PC-9 (cell line): ENCODE measurements at regions of chr2 and their contacts with region 1.

Region 1: DNA sequence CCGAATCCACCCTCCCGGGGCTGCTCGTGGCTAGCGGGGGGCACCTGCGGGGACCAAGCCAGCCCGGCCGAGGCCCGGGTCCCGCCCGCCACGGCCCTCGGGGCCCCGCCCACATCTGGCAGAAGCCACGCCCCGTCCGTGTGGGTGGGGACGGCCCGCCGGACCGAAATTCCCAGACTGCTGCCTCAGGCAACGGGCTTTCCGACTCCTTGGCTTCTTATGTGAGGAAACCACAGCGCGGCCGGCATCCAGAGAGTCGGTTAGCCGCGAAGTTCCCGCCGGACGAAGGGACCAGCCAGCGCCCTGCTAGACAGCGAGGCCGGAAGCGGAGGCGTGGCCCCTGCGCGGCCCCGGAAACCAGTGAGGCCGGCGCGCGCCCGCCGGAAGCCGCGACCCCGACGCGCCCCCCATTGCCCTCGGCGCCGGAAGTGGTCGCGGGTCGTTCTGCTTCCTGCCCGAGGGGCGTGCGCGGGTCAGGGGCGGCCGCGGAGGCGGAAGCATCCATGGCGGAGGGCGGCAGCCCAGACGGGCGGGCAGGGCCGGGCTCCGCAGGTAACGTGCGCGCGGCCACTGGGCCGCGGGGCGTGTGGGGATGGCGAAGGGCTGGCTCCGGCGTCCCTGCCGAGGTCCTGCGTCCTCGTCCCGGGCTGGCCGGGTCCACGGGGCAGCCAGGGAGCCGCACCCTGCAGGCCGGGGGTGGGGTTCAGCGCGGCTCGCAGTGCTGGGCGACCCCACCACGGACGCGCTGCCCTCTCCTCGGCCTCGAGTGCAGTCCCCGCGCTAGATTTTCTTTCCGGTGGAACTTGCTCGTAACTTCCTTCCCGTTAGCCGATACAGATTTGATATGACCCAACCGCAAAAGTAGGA is at the start of gene ASB1:
- DNase-seq: peak; percentile 78 to 89
- H3K4me3 ChIP-seq: peak within 1 kb of the TSS; percentile 92
- H3K27ac ChIP-seq: peak within 1 kb of the TSS; percentile 75
- H3K4me1 ChIP-seq: peaks cover 17% of the 10 kb centered on the region
- H3K27me3 ChIP-seq: no peaks in the 10 kb centered on the region
- CTCF ChIP-seq: no peak
- total RNA-seq, gene ASB1: 56.7 and 64.6 TPM in 2 replicates

Region 2: DNA sequence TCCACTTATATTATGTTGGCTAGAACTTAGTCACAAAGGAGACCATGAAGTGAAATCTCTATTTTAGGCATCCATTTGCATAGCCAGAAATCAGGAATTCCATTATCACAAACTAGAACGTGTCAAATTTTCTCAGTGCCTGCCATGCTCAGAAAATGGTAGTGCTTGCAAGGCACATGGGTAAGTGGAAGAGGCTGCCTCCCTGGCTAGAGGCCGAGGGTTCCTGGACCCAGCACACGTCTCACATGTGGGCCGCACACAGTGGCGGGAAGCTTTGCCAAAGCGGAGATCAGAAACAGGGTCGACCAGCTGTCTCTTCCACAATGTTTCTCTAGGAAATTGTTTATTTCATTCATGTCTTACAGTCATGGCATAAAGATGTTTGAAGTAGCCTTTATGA is 64.2 kb before region 1 on chr2:
- CTCF ChIA-PET with region 1: no interaction called
- POLR2A ChIA-PET with region 1: no interaction called
- intact Hi-C with region 1: loop called (anchors 5 kb)
- DNase-seq: no peak
- H3K4me3 ChIP-seq: no peak overlapping the region
- H3K27ac ChIP-seq: no peak overlapping the region
- H3K4me1 ChIP-seq: no peaks in the 10 kb centered on the region
- H3K27me3 ChIP-seq: no peaks in the 10 kb centered on the region
- CTCF ChIP-seq: no peak

Region 3: GRCh38 chr2:238408615-238409581 is 17.9 kb before region 1 on chr2:
- CTCF ChIA-PET with region 1: no interaction called
- POLR2A ChIA-PET with region 1: interaction called, 10 read pairs
- intact Hi-C with region 1: no loop called
- DNase-seq: no peak
- H3K4me3 ChIP-seq: no peak overlapping the region
- H3K27ac ChIP-seq: no peak overlapping the region
- H3K4me1 ChIP-seq: no peaks in the 10 kb centered on the region
- H3K27me3 ChIP-seq: no peaks in the 10 kb centered on the region
- CTCF ChIP-seq: no peak